ENCODE measurements at regions of chr15 and their contacts with region 1.

Region 1: GRCh38 chr15:55816017-55816416 is 73.1 kb upstream of the PRTG start:
- DNase-seq: no peak
- ATAC-seq: no peak
- H3K4me3 ChIP-seq: no peak overlapping the region
- H3K27ac ChIP-seq: no peak overlapping the region
- H3K4me1 ChIP-seq: no peaks in the 10 kb centered on the region
- H3K27me3 ChIP-seq: no peaks in the 10 kb centered on the region
- CTCF ChIP-seq: no peak
- POLR2A ChIP-seq: no peak

Region 2: DNA sequence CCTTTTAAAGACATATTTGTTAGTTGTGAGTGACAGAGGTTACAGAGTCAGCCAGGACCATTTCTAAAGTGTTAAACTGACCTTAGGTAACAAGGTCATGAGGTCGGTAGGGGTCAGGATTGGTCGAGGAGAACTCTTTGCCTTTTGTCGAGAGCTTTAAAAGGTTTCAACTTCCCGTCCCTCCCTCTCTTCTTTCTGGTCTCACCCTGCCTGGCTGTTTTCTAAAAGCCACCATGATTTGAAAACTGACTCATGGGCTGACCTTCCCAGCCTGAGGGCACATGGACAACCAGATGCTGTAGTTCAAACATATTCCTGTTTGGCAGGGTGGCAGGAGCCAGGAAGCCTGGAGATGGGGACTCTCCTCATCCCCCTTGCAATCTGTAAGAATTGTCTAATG is 47.3 kb before region 1 on chr15:
- intact Hi-C with region 1: loop called in 1 of 10 experiments (anchors 5 kb)
- DNase-seq: no peak
- ATAC-seq: no peak
- H3K4me3 ChIP-seq: no peak overlapping the region
- H3K27ac ChIP-seq: no peak overlapping the region
- H3K4me1 ChIP-seq: no peaks in the 10 kb centered on the region
- H3K27me3 ChIP-seq: no peaks in the 10 kb centered on the region
- CTCF ChIP-seq: no peak
- POLR2A ChIP-seq: no peak

Region 3: GRCh38 chr15:55799291-55800212 is 16.5 kb before region 1 on chr15:
- intact Hi-C with region 1: no loop called
- DNase-seq: no peak
- ATAC-seq: no peak
- H3K4me3 ChIP-seq: no peak overlapping the region
- H3K27ac ChIP-seq: no peak overlapping the region
- H3K4me1 ChIP-seq: no peaks in the 10 kb centered on the region
- H3K27me3 ChIP-seq: no peaks in the 10 kb centered on the region
- CTCF ChIP-seq: peak in 11 of 12 donors; percentile 24 to 57 (median 45)
- POLR2A ChIP-seq: no peak

Region 4: DNA sequence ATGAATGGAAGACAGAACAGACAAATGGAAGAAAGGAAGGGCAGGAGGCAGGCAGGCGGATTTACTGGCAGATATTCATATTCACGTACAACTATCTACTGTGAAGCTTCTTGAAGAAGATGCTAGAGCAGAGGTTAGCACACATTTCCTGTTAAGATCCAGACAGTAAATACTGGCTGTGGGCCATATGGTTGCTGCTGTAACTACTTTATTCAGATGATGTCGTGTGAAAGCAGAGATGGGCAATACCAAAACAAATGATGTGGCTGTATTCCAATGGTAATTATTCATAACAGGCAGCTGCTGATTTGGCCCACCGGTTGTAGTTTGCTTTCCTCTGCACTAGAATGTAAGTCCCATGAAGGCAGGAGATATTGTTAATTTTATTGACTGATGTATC is 42.6 kb after region 1 on chr15:
- intact Hi-C with region 1: no loop called
- DNase-seq: no peak
- ATAC-seq: no peak
- H3K4me3 ChIP-seq: no peak overlapping the region
- H3K27ac ChIP-seq: no peak overlapping the region
- H3K4me1 ChIP-seq: peaks cover 0 to 4% (median 0%) of the 10 kb centered on the region in 12 donors
- H3K27me3 ChIP-seq: no peaks in the 10 kb centered on the region
- CTCF ChIP-seq: no peak
- POLR2A ChIP-seq: no peak

Region 5: DNA sequence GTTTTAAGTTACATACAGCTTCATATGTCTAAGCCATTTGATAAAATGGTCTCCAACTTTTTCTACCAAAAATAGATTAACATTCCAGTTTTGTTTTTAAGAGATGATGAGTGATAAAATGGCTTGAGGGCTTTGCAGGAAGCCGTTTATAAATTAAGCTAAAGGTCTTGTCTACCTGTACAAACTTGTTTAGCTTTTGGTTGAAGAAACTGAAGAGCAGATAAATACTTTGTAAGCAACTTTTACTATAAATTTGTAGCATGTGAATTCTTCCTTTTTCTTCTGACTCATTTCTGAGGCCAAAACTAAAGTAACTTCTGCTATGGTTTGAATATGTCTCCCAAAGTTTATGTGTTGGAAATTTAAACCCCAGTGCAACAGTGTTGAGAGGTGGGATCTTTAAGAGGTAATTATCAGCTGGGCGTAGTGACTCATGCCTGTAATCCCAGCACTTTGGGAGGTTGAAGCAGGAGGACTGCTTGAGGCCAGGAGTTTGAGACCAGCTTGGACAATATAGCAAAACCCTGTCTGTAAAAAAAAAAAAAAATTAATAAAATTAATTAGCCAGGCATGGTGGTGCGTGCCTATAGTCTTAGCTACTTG is 185.6 kb after region 1 on chr15:
- intact Hi-C with region 1: no loop called
- DNase-seq: no peak
- ATAC-seq: no peak
- H3K4me3 ChIP-seq: no peak overlapping the region
- H3K27ac ChIP-seq: no peak overlapping the region
- H3K4me1 ChIP-seq: no peaks in the 10 kb centered on the region
- H3K27me3 ChIP-seq: no peaks in the 10 kb centered on the region
- CTCF ChIP-seq: no peak
- POLR2A ChIP-seq: no peak

Measured in heart left ventricle (tissue), 16 donors.